ENCODE measurements at regions of chr6 and their contacts with region 1.

Region 1: DNA sequence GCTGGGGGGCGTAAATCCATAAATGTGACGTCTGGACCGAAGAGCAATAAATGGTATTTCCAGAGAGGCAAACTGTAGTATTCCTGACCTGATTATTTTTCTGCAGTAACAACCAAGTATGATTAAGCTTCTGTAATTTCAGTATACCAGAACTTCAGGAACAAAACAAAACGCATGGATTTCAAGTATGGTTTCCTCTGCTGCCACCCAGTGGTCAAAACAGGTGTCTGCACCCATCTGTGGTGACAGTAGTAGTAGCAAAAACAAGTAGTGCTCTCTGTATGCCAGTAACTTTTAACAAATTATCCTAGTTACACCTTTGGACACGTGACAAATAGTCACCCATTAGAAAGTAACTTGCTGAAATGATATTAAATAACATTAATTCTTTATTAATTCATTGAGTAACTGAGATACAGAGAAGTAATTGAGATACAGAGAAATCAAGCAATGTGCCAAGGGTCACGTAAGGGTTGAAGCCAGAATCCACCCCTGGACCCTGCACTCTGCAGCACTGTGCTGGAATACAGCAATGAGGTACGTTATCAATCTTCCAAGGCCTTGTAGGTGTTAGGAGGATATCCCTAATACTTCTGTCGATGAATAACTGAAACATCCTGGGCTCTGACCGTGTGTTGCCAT is 7.9 kb downstream of the CALHM4 start:
- H3K4me3 ChIP-seq: no peak overlapping the region
- H3K27ac ChIP-seq: no peak overlapping the region
- H3K4me1 ChIP-seq: peaks cover 4% of the 10 kb centered on the region; the same call in 1 of the 2 replicates
- CTCF ChIP-seq: peak; percentile 48; the same call in 1 of the 2 replicates

Region 2: DNA sequence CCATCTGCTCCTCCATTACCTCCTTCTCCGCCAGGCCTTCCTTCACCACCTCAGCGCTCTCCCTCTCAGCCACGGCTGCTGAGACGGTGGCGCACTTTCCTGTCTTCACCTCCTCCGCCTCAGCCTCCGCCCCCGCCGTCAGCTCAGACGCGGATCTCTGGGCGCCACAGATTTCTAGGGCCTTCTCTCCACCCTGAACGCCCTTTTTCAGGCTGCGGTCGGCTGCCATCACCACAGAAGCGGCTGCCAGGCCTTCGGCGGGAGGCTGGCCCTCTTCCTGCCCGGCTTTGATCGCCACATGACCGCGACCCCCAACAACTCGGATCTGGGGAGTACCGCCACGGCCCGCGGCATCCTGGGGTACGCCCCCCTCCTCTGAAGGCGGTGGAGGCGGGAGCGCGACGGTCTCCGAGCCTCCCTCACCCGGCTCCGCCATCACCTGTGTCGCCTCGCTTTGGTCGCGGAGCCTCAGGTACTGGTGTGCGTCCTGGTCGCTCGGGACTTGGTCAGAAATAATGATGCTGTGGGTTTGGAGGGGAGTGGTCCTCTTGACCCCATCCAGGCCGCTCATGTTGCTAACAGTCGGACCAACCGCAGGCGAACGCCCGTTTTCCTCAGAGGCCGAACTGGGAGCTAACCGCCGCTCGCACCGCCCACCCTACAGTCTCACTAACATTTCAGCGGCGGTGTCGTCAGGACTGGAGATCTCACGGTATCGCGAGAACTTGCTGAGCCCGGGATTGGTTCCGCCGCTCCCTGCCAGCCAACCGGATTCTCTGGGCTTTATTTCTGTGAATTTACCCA is 282.0 kb before region 1 on chr6 and contains the start of gene TSPYL1:
- CTCF ChIA-PET with region 1: interaction called, 14 read pairs
- POLR2A ChIA-PET with region 1: interaction called, 3 read pairs
- H3K4me3 ChIP-seq: peak within 1 kb of the TSS; percentile 97
- H3K27ac ChIP-seq: peak within 1 kb of the TSS; percentile 94
- H3K4me1 ChIP-seq: peaks cover 4% of the 10 kb centered on the region; the same call in 1 of the 2 replicates
- CTCF ChIP-seq: peak; percentile 87

Region 3: DNA sequence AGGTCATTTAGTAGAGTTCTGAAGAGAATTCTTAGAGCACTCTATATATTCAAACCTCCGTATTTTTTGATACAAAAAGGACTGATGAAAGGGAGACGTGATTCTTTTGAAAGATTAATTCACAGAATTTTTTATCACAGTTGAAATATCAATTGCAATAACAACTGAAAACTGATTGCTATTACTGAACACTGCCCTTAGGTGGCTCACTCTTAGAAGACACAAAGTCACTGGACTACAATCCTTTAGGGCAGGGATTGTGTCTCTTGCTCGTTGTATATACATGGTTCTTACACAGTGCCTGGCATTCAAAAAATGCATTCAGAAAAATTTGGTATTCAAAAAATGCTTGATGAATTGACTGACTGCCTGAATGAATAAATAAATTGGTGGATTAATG is 117.4 kb before region 1 on chr6:
- CTCF ChIA-PET with region 1: interaction called, 19 read pairs
- POLR2A ChIA-PET with region 1: no interaction called
- H3K4me3 ChIP-seq: no peak overlapping the region
- H3K27ac ChIP-seq: no peak overlapping the region
- H3K4me1 ChIP-seq: peaks cover 14% of the 10 kb centered on the region
- CTCF ChIP-seq: 0 out of 2 replicates have a peak, but pooled peaks have one; percentile 20

Region 4: GRCh38 chr6:116511404-116512110 is 49.9 kb before region 1 on chr6 and contains the start of gene CALHM5:
- CTCF ChIA-PET with region 1: interaction called, 26 read pairs
- POLR2A ChIA-PET with region 1: no interaction called
- H3K4me3 ChIP-seq: peak within 1 kb of the TSS; percentile 27
- H3K27ac ChIP-seq: peak within 1 kb of the TSS; percentile 28
- H3K4me1 ChIP-seq: peaks cover 13% of the 10 kb centered on the region
- CTCF ChIP-seq: peak; percentile 50

Region 5: DNA sequence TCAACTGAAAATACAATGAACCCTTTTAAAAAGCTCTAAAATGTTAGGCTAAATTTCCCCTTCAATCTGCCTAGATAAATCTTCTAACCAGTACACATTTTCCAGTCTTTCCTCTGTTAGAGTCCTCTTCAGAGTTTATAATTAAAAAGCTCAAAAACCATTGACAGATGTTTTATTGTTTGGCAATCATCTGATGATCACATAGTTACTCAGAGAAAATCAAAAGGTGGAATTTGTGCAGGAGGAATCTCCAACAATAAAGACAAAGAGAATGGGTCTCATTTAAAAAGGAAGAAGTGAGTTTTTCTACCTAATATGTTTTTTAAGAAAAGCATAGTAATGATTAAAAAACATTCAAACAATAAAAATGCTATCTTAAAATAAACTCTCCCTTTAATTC is 19.1 kb before region 1 on chr6:
- CTCF ChIA-PET with region 1: interaction called, 63 read pairs
- POLR2A ChIA-PET with region 1: no interaction called
- H3K4me3 ChIP-seq: no peak overlapping the region
- H3K27ac ChIP-seq: no peak overlapping the region
- H3K4me1 ChIP-seq: no peaks in the 10 kb centered on the region
- CTCF ChIP-seq: no peak

Region 6: GRCh38 chr6:116550796-116551195 is 10.7 kb before region 1 on chr6:
- CTCF ChIA-PET with region 1: interaction called, 24 read pairs
- POLR2A ChIA-PET with region 1: no interaction called
- H3K4me3 ChIP-seq: no peak overlapping the region
- H3K27ac ChIP-seq: no peak overlapping the region
- H3K4me1 ChIP-seq: no peaks in the 10 kb centered on the region
- CTCF ChIP-seq: no peak

Region 7: GRCh38 chr6:116648156-116648555 is 86.7 kb after region 1 on chr6:
- CTCF ChIA-PET with region 1: interaction called, 28 read pairs
- POLR2A ChIA-PET with region 1: no interaction called
- H3K4me3 ChIP-seq: no peak overlapping the region
- H3K27ac ChIP-seq: no peak overlapping the region
- H3K4me1 ChIP-seq: peaks cover 11% of the 10 kb centered on the region
- CTCF ChIP-seq: no peak

Measured in HEK293 (cell line).